AG04449 (cell line): ENCODE measurements at regions of chr11 and their contacts with region 1.

Region 1: DNA sequence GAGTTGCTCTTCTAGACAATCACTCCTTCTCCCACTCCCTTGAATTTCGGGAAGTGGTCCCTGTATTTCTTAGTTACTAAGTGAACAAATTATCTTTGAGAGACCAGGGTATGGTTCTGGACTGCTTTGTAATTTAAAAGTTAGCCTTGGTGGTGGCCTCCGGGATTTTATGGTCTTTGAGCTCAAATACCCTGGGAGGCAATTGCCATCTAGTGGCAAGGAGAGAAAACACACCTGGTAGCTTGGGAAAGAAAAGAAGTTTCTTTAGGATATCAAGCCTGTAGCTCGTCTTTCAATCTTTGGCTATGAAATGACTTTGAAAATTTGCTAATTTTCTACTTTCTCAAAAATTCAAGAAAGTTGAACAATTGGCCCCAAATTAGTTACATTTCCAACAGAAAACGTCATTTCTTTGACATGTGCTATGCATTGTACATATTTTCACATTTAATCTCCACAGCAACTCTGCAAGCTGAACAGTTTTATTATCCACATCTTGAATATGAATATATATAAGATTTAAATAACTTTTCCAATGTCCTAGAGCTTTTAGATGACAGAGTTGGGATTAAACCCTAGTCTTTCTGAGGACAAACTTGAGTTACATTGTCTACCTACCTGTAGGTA is 39.1 kb downstream of the MMP27 start:
- DNase-seq: no peak
- H3K4me3 ChIP-seq: no peak overlapping the region
- CTCF ChIP-seq: peak; percentile 63

Region 2: DNA sequence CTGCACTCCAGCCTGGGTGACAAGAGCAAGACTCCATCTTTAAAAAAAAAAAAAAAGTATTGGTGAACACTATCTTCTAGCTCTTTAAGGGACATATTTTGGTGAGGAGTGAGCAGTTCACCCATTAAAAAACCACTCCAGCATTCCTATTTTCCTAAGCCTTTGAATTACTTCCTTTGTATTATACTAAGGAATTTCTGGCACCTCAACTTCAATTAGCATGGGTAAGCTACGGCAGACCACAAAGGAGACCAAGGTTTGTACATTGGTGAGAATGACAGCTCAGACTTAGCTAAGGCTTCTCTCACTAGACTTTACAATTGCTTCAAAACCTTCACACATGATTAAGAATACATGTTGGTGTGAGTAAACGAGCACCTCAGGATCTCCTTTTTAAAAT is 406.2 kb before region 1 on chr11:
- CTCF ChIA-PET with region 1: no interaction called
- POLR2A ChIA-PET with region 1: no interaction called
- DNase-seq: no peak
- H3K4me3 ChIP-seq: no peak overlapping the region
- CTCF ChIP-seq: no peak

Region 3: GRCh38 chr11:102293873-102294601 is 372.4 kb before region 1 on chr11:
- CTCF ChIA-PET with region 1: interaction called, 79 read pairs
- POLR2A ChIA-PET with region 1: no interaction called
- DNase-seq: no peak
- H3K4me3 ChIP-seq: no peak overlapping the region
- CTCF ChIP-seq: peak; percentile 55

Region 4: GRCh38 chr11:102390667-102391465 is 275.6 kb before region 1 on chr11:
- CTCF ChIA-PET with region 1: interaction called, 49 read pairs
- POLR2A ChIA-PET with region 1: no interaction called
- DNase-seq: no peak
- H3K4me3 ChIP-seq: no peak overlapping the region
- CTCF ChIP-seq: peak; percentile 87

Region 5: GRCh38 chr11:102614485-102614884 is 52.0 kb before region 1 on chr11:
- CTCF ChIA-PET with region 1: interaction called, 25 read pairs
- POLR2A ChIA-PET with region 1: no interaction called
- DNase-seq: no peak
- H3K4me3 ChIP-seq: no peak overlapping the region
- CTCF ChIP-seq: no peak

Region 6: GRCh38 chr11:102680945-102681344 is 14.5 kb after region 1 on chr11:
- CTCF ChIA-PET with region 1: interaction called, 69 read pairs
- POLR2A ChIA-PET with region 1: no interaction called
- DNase-seq: no peak
- H3K4me3 ChIP-seq: no peak overlapping the region
- CTCF ChIP-seq: no peak